Colonic mucosa (tissue), 4 donors: ENCODE measurements at regions of chr4 and their contacts with region 1.

Region 1: GRCh38 chr4:102449751-102450352 is 51.3 kb upstream of the NFKB1 start:
- DNase-seq: peak; percentile 63
- H3K4me3 ChIP-seq: no peak overlapping the region
- H3K27ac ChIP-seq: no peak overlapping the region
- H3K4me1 ChIP-seq: peaks cover 2% of the 10 kb centered on the region
- H3K27me3 ChIP-seq: no peaks in the 10 kb centered on the region
- CTCF ChIP-seq: peak; percentile 63

Region 2: DNA sequence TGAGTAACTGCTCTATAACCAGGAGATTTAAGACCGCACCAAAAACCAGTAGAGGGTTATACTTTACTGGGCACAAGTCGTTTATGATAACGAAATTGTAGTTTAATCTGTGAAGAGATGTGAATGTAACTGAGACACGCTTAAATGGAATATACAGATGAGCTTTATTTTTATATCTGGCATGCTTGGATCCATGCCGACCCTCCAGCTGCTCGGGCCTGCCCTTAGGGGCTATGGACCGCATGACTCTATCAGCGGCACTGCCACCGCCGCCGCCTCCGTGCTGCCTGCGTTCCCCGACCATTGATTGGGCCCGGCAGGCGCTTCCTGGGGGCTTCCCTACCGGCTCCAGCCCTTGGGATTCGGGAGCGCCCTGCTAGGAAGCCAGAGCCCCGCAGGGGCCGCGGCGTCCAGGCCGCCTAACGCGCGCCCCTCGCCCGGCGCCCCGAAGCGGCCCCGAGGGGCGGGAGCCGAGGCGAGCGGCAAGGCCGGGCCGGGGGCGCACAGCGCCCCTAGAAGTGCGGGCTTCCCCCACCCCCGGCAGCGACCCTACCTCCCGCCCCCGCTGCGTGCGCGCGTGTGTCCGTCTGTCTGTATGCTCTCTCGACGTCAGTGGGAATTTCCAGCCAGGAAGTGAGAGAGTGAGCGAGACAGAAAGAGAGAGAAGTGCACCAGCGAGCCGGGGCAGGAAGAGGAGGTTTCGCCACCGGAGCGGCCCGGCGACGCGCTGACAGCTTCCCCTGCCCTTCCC is 51.0 kb after region 1 on chr4 and contains the start of gene NFKB1:
- intact Hi-C with region 1: loop called (anchors 5 kb)
- DNase-seq: peak; percentile 69
- H3K4me3 ChIP-seq: peak within 1 kb of the TSS; percentile 69
- H3K27ac ChIP-seq: peak within 1 kb of the TSS; percentile 95
- H3K4me1 ChIP-seq: peaks cover 4% of the 10 kb centered on the region
- H3K27me3 ChIP-seq: no peaks in the 10 kb centered on the region
- CTCF ChIP-seq: no peak
- total RNA-seq, gene NFKB1: 57.6 to 61.6 TPM

Region 3: GRCh38 chr4:102620697-102621497 is 171.0 kb after region 1 on chr4:
- intact Hi-C with region 1: loop called (anchors 5 kb)
- DNase-seq: peak; percentile 60
- H3K4me3 ChIP-seq: no peak overlapping the region
- H3K27ac ChIP-seq: peak overlapping the region; percentile 69
- H3K4me1 ChIP-seq: no peaks in the 10 kb centered on the region
- H3K27me3 ChIP-seq: no peaks in the 10 kb centered on the region
- CTCF ChIP-seq: peak; percentile 45

Region 4: GRCh38 chr4:102663073-102663472 is 213.2 kb after region 1 on chr4:
- intact Hi-C with region 1: no loop called
- DNase-seq: no peak
- H3K4me3 ChIP-seq: no peak overlapping the region
- H3K27ac ChIP-seq: no peak overlapping the region
- H3K4me1 ChIP-seq: no peaks in the 10 kb centered on the region
- H3K27me3 ChIP-seq: no peaks in the 10 kb centered on the region
- CTCF ChIP-seq: no peak

Region 5: DNA sequence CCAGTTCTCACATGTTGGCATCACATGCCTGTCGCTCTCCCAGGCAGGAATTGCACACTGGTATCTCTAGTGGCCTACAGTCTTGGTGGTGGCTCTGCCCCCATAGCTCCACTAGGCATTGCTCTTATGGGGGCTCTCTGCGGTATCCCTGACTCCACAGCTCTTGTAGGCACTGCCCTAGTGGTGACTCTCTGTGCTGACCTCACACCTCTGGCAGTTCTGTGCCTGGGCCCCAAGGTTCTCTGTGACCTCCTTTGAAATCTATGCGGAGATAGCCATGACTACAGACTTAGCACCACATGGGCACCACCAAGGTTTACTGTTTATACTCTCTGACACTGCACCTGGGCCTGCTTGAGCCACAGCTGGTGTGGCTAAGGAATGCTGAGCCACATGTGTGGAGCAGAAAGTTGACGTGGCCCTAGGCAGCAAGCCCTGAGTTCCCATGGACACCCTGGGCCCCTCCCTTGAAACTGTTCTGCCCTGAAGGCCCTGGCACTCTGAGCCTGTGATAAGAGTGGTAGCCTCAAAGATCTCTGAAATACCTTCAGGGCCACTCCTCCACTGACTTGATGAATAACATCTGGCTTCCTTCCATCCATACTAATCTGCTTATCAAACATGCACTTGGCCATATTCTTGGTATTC is 561.6 kb after region 1 on chr4:
- intact Hi-C with region 1: loop called (anchors 5 kb)
- DNase-seq: peak; percentile 53
- H3K4me3 ChIP-seq: no peak overlapping the region
- H3K27ac ChIP-seq: no peak overlapping the region
- H3K4me1 ChIP-seq: peaks cover 4% of the 10 kb centered on the region
- H3K27me3 ChIP-seq: no peaks in the 10 kb centered on the region
- CTCF ChIP-seq: no peak

Region 6: DNA sequence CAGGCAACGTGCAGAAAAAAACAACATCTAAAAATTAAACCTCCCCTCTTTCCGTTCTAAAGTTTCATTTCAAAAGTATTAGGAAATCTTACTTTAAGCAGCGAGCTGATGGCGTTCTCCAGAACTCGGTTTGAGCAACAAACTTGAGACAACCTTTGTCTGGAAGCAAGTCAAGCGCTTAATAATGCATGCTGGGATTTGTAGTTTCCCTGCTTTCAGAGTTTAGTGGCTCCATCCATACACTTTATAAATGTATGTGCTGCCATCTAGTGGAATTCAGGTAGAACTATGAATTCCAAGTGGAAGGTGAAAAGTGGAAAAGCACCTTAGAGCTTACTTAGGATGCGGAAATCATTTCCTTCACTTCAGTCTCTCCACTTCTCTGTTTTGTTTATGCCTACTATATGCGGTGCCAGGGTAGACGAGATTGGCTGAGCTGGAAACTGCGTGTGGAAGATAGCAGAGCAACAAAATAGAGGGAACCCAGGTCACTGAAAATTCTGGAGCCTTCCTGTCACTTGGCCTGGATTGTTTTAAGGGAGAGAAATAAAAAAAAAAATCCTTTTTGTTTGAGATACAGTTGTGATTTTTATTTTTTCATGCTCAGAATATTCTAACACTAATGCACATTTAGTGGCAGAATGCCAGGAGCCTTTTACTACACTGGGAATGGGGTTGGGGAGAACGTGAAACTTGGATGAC is 650.0 kb after region 1 on chr4 and contains the start of gene BDH2:
- intact Hi-C with region 1: loop called (anchors 10 kb)
- DNase-seq: peak; percentile 73
- H3K4me3 ChIP-seq: peak within 1 kb of the TSS; percentile 35
- H3K27ac ChIP-seq: peak within 1 kb of the TSS; percentile 41
- H3K4me1 ChIP-seq: no peaks in the 10 kb centered on the region
- H3K27me3 ChIP-seq: no peaks in the 10 kb centered on the region
- CTCF ChIP-seq: peak; percentile 78
- total RNA-seq, gene BDH2: 14.0 to 35.3 TPM